OCI-LY7 (cell line): ENCODE measurements at regions of chr10 and their contacts with region 1.

Region 1: DNA sequence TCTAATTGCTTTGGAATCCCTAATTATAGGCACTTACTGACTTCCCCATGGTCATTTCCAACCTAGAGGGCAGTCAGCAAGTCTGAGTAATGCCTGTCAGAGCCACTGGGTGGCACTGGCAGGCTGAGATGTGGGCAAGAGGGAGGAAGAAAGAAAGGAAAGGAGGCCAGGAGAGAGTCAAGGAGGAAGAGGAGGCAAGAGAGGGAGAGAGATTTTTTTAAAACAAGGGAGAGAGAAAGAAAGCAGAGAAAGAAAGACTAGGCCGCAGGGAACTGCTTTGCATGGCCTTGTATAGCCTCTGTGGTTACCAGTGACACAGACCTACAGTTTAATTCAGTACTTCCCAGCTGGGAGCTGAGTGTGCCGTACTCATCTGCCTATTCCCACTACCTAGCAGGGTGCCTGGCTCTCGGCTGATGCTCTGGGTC is 210.4 kb upstream of the ADO start:
- DNase-seq: peak; percentile 75
- H3K4me3 ChIP-seq: no peak overlapping the region
- H3K27ac ChIP-seq: no peak overlapping the region
- H3K4me1 ChIP-seq: peaks cover 6% of the 10 kb centered on the region
- CTCF ChIP-seq: peak; percentile 99

Region 2: DNA sequence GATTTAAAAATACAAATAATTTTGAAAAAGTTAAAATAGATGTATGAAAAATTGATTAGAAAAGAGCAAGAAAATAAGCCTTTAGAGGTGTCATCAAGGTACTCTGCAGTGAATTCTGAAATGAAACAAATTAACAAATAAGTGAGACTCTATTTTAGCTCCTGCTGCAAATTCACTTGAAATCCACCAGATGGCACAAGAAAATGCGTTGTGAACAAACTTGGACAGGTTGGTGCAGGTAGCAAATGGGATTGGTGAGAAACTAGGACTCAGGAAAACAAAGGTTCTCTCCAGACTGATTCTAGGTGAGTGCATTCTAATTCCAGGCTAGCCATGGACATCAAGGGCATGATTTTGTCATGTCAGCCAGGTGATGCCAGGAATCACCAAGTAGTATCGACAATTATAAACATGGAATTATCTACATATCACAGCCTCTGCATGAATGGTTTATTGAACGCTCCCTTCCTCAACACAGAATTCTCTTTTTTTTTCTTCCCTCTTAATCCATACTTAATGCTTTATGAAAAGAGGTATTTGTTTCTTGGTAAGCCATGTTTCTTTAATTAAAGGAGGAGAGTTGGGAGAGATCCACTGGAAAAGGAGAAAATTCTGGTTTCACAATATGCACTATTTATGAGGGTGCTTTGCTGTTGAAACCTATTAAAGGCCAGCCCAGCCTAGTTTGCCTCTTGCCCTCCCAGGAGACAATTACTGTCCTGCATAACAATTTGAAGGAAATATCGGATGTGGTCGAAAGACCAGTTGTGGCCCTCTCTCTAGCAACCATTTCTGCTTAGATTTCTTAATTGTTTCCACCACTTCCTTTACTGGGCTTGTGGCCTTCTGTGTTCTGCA is 101.9 kb before region 1 on chr10:
- CTCF ChIA-PET with region 1: interaction called, 3 read pairs
- POLR2A ChIA-PET with region 1: interaction called, 4 read pairs
- intact Hi-C with region 1: loop called (anchors 1 kb)
- DNase-seq: peak; percentile 72
- H3K4me3 ChIP-seq: no peak overlapping the region
- H3K27ac ChIP-seq: no peak overlapping the region
- H3K4me1 ChIP-seq: peaks cover 3% of the 10 kb centered on the region
- CTCF ChIP-seq: peak; percentile 93

Region 3: GRCh38 chr10:63083904-63084689 is 490.0 kb after region 1 on chr10:
- CTCF ChIA-PET with region 1: no interaction called
- POLR2A ChIA-PET with region 1: no interaction called
- intact Hi-C with region 1: loop called (anchors 5 kb)
- DNase-seq: peak; percentile 74
- H3K4me3 ChIP-seq: no peak overlapping the region
- H3K27ac ChIP-seq: no peak overlapping the region
- H3K4me1 ChIP-seq: no peaks in the 10 kb centered on the region
- CTCF ChIP-seq: peak; percentile 85

Region 4: DNA sequence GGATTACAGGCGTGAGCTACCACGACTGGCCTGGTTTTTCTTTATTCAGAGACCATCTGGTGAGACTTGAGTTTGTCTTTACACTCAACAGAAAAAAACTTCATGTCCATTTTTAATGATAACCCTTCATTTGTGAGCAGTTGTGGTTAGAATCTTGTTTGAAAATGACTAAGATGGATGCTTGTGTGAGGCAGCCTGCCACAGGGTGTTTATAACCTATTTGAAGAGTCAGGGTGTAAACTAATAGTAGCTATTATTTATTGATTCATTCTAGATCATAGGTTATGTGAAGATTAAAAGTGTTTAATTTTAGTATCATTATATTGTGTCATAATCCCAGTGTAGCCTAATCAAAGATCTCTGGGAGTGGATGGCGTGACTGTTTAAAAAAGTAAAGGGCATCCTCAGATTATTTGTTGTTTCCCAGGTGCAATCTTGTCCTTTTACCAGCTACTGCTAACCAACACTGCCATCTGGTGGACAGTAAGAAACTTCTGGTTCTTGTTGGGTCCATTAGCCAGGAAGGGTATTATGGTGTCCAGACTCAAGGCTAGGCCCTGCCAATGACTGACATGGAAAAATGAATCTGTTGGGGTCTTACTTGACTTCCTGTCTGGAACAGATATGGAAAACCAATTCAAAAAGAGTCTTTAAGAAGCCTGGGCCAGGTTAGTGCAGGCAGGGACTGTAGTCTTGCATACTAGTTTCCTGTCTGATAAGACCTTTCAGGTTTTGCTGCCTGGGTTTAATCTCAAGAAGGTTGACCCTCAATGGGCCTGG is 563.9 kb after region 1 on chr10:
- CTCF ChIA-PET with region 1: no interaction called
- POLR2A ChIA-PET with region 1: no interaction called
- intact Hi-C with region 1: loop called (anchors 1 kb)
- DNase-seq: peak; percentile 87
- H3K4me3 ChIP-seq: no peak overlapping the region
- H3K27ac ChIP-seq: no peak overlapping the region
- H3K4me1 ChIP-seq: no peaks in the 10 kb centered on the region
- CTCF ChIP-seq: peak; percentile 96